HepG2 (cell line): ENCODE measurements at regions of chr16 and their contacts with region 1.

Region 1: GRCh38 chr16:28025631-28026030 is 37.9 kb downstream of the GSG1L start:
- DNase-seq: no peak
- ATAC-seq: peak; percentile 49
- H3K4me3 ChIP-seq: no peak overlapping the region
- H3K27ac ChIP-seq: no peak overlapping the region
- H3K4me1 ChIP-seq: no peaks in the 10 kb centered on the region
- H3K27me3 ChIP-seq: peaks cover 2 to 31% of the 10 kb centered on the region in 2 experiments
- CTCF ChIP-seq: no peak
- EP300 ChIP-seq: no peak
- POLR2A ChIP-seq: no peak
- RAD21 ChIP-seq: no peak

Region 2: GRCh38 chr16:27993587-27993986 is 32.0 kb before region 1 on chr16:
- CTCF ChIA-PET with region 1: no interaction called
- POLR2A ChIA-PET with region 1: no interaction called
- in situ Hi-C with region 1: no loop called
- intact Hi-C with region 1: loop called (anchors 1 kb)
- DNase-seq: no peak
- ATAC-seq: no peak
- H3K4me3 ChIP-seq: no peak overlapping the region
- H3K27ac ChIP-seq: no peak overlapping the region
- H3K4me1 ChIP-seq: no peaks in the 10 kb centered on the region
- H3K27me3 ChIP-seq: no peaks in the 10 kb centered on the region
- CTCF ChIP-seq: no peak
- EP300 ChIP-seq: no peak
- POLR2A ChIP-seq: no peak
- RAD21 ChIP-seq: no peak